ENCODE measurements at regions of chr19 and their contacts with region 1.

Region 1: GRCh38 chr19:53879140-53880081 is 2.6 kb upstream of the PRKCG start:
- DNase-seq: peak; percentile 60 to 86 (median 73)
- H3K4me3 ChIP-seq: peak overlapping the region; percentile 74
- H3K4me3 Mint-ChIP-seq: peak overlapping the region in 1 of 7 donors; percentile 80
- H3K27ac ChIP-seq: no peak overlapping the region
- H3K27ac Mint-ChIP-seq: peak overlapping the region in 2 of 8 donors; percentile 19 to 43
- H3K4me1 ChIP-seq: peaks cover 70% of the 10 kb centered on the region
- H3K4me1 Mint-ChIP-seq: peaks cover 49 to 56% (median 53%) of the 10 kb centered on the region in 3 donors
- H3K27me3 ChIP-seq: peaks cover 37% of the 10 kb centered on the region
- H3K27me3 Mint-ChIP-seq: peaks cover 17 to 21% of the 10 kb centered on the region in 2 donors

Region 2: DNA sequence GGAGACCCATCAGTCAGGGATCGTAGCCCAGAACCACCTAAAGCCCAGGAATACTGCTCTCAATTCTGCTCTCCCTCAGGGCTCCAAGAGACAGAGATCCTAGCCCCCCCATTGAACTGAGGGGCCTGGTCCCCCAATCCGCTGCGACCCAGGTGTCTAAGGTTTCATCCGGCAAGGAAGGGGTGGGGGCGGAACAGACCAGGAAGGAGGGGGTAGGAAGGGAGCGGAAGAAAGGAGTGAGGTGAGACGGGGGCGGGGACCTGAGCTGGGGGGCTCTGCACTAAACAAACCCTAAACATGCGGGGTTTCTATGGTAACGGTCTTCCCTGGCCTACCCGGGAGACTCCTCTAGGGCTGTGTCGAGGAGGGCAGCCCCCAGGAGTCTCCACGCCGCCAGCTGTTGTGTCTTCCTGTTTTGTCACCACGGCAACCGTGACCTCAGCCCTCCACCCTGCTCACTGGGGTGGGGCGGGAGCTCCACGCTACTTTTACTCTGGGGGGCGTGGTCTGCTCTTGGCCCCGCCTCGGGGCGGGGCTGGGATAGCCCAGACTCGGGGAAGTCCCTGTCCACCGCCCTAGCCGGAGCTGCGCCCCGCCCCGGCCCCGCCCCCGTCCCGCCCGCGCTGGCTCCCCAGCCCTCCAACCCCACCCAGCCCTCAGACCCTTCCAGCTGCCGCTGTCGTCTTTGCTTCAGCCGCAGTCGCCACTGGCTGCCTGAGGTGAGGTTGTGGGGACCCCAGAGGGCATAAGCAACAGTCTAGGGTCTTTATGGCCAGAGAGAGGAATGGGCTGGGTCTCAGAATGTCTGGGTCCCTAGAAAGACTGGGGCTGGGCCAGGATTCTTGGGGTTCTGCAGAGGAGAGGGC is 12.0 kb before region 1 on chr19 and contains the start of gene MYADM:
- CTCF ChIA-PET with region 1: interaction called, 29 read pairs
- POLR2A ChIA-PET with region 1: interaction called, 14 read pairs
- DNase-seq: peak; percentile 99 to 100 (median 100)
- H3K4me3 ChIP-seq: peak within 1 kb of the TSS; percentile 94
- H3K4me3 Mint-ChIP-seq: peak within 1 kb of the TSS; percentile 95 to 99 (median 98)
- H3K27ac ChIP-seq: peak within 1 kb of the TSS; percentile 97
- H3K27ac Mint-ChIP-seq: peak within 1 kb of the TSS; percentile 99 to 100 (median 100)
- H3K4me1 ChIP-seq: peaks cover 31% of the 10 kb centered on the region
- H3K4me1 Mint-ChIP-seq: peaks cover 29 to 44% (median 33%) of the 10 kb centered on the region in 3 donors
- H3K27me3 ChIP-seq: no peaks in the 10 kb centered on the region
- H3K27me3 Mint-ChIP-seq: peaks cover 0 to 20% of the 10 kb centered on the region in 2 donors
- total RNA-seq, gene MYADM: 44.2 to 47.8 TPM

Measured in CD8-positive, alpha-beta memory T cell (primary cell).